ENCODE measurements at regions of chr5 and their contacts with region 1.

Region 1: GRCh38 chr5:10452768-10453331 is 11.2 kb downstream of the ROPN1L start:
- DNase-seq: peak; percentile 86 to 94 (median 91)
- H3K4me3 ChIP-seq: no peak overlapping the region
- H3K27ac ChIP-seq: no peak overlapping the region
- H3K4me1 ChIP-seq: peaks cover 0 to 32% (median 12%) of the 10 kb centered on the region in 4 experiments
- H3K27me3 ChIP-seq: no peaks in the 10 kb centered on the region

Region 2: GRCh38 chr5:10441083-10441991 is 11.5 kb before region 1 on chr5 and contains the start of gene ROPN1L:
- CTCF ChIA-PET with region 1: interaction called, 12 read pairs
- POLR2A ChIA-PET with region 1: interaction called, 3 read pairs
- DNase-seq: peak; percentile 75 to 86 (median 84)
- H3K4me3 ChIP-seq: peak within 1 kb of the TSS; percentile 57 to 89 (median 81)
- H3K27ac ChIP-seq: peak within 1 kb of the TSS in 1 of 2 experiments; percentile 39
- H3K4me1 ChIP-seq: peaks cover 19 to 51% (median 46%) of the 10 kb centered on the region in 4 experiments
- H3K27me3 ChIP-seq: no peaks in the 10 kb centered on the region

Region 3: GRCh38 chr5:10564838-10565784 is 112.3 kb after region 1 on chr5:
- CTCF ChIA-PET with region 1: interaction called, 20 read pairs
- POLR2A ChIA-PET with region 1: no interaction called
- DNase-seq: peak in 1 of 3 donors; percentile 49
- H3K4me3 ChIP-seq: peak overlapping the region; percentile 25 to 88 (median 79)
- H3K27ac ChIP-seq: no peak overlapping the region
- H3K4me1 ChIP-seq: peaks cover 4 to 51% (median 48%) of the 10 kb centered on the region in 4 experiments
- H3K27me3 ChIP-seq: no peaks in the 10 kb centered on the region

Region 4: GRCh38 chr5:10620346-10620745 is 167.5 kb after region 1 on chr5:
- CTCF ChIA-PET with region 1: interaction called, 130 read pairs
- POLR2A ChIA-PET with region 1: no interaction called
- DNase-seq: no peak
- H3K4me3 ChIP-seq: no peak overlapping the region
- H3K27ac ChIP-seq: no peak overlapping the region
- H3K4me1 ChIP-seq: peaks cover 0 to 8% (median 4%) of the 10 kb centered on the region in 4 experiments
- H3K27me3 ChIP-seq: no peaks in the 10 kb centered on the region

Region 5: GRCh38 chr5:10635257-10635866 is 182.5 kb after region 1 on chr5:
- CTCF ChIA-PET with region 1: interaction called, 130 read pairs
- POLR2A ChIA-PET with region 1: no interaction called
- DNase-seq: peak; percentile 69 to 93 (median 91)
- H3K4me3 ChIP-seq: peak overlapping the region in 1 of 7 experiments; percentile 30
- H3K27ac ChIP-seq: no peak overlapping the region
- H3K4me1 ChIP-seq: peaks cover 10 to 51% (median 41%) of the 10 kb centered on the region in 4 experiments
- H3K27me3 ChIP-seq: no peaks in the 10 kb centered on the region

Region 6: DNA sequence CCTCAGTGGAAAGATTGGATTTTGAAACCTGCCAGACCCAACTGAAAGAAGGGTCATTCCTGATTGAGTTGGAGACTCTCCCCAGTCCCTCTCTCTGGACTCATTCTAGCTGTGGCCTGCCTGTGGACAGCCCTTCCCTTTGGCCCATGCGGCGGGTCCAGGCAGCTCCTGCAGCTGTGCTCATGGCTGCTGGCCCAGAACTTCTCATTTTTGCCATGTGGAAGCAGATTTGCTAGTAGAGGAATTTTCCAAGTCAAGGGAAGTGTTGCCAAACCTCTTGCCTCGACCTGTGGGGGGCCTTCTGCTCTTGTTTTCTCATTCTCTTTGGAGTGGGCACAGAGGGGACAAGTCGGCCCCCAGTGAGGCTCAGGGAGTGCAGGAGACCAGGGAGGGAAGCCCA is 200.2 kb after region 1 on chr5:
- CTCF ChIA-PET with region 1: no interaction called
- POLR2A ChIA-PET with region 1: no interaction called
- DNase-seq: no peak
- H3K4me3 ChIP-seq: no peak overlapping the region
- H3K27ac ChIP-seq: no peak overlapping the region
- H3K4me1 ChIP-seq: no peaks in the 10 kb centered on the region
- H3K27me3 ChIP-seq: no peaks in the 10 kb centered on the region

Measured in common myeloid progenitor, CD34-positive (primary cell).